GM12878 (cell line): ENCODE measurements at regions of chr6 and their contacts with region 1.

Region 1: GRCh38 chr6:157405986-157406385 is 25.0 kb downstream of the ZDHHC14 start:
- DNase-seq: no peak
- ATAC-seq: no peak
- H3K4me3 ChIP-seq: no peak overlapping the region
- H3K27ac ChIP-seq: no peak overlapping the region
- H3K4me1 ChIP-seq: no peaks in the 10 kb centered on the region
- H3K27me3 ChIP-seq: no peaks in the 10 kb centered on the region; a peak in 1 of 4 replicates
- CTCF ChIP-seq: no peak
- EP300 ChIP-seq: no peak
- POLR2A ChIP-seq: no peak
- RAD21 ChIP-seq: no peak

Region 2: DNA sequence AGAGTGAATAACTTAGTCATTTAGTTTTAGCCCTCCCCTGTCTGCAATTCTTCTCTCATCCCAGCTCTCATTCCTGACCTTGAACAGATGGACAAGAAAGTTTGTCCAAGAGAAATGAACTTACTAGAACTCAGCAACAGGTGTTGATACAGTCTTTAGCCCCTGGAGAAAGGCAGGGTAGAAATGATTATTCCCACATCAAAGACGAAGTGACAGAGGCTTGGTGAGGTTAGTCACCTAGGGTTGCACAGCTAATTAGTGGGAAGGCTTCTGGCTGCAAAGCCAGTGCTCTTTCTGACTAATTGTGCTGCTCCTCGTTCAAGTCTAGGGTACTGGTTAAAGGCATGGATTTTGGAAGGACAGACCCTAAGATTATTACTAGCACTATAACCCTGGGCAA is 20.5 kb before region 1 on chr6:
- CTCF ChIA-PET with region 1: no interaction called
- POLR2A ChIA-PET with region 1: no interaction called
- RAD21 ChIA-PET with region 1: no interaction called
- SMC1A ChIA-PET with region 1: interaction called, 14 read pairs
- in situ Hi-C with region 1: no loop called
- intact Hi-C with region 1: no loop called
- DNase-seq: peak; percentile 44
- ATAC-seq: peak; percentile 45
- H3K4me3 ChIP-seq: no peak overlapping the region
- H3K27ac ChIP-seq: no peak overlapping the region
- H3K4me1 ChIP-seq: no peaks in the 10 kb centered on the region
- H3K27me3 ChIP-seq: peaks cover 0 to 4% of the 10 kb centered on the region in 2 experiments; a peak in 1 of 4 replicates
- CTCF ChIP-seq: no peak
- EP300 ChIP-seq: peak; percentile 48 to 52; a peak in 2 of 4 replicates
- POLR2A ChIP-seq: no peak
- RAD21 ChIP-seq: no peak

Region 3: DNA sequence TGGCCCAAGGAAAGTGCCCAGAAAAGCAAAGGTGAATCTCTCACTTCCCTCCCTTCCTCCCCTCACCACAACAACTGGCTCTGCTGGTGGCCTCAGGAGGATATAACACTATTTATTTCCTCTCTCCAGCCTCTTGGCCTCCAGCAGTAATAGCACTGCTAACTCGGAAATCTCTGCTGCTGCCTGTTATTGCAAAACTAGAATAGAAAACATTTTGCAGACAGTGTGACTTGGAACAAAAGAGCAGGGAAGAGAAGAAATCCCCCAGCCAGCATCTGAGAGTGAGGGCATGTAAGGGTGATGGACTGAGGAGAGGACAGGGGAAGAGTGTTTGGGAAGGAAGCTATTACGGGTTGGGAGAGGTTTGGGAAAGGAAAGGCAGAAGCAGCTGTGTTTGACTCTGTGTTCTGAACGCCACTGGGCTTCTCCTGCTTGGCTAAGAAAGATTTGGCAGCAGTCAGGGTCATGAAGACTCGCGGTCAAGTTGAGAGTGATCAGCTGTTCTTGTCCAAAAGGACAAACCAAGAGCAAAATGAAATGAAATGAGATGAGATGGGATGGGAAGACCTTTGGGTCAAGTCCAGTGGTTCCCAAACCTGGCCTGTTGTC is 336.1 kb after region 1 on chr6:
- CTCF ChIA-PET with region 1: no interaction called
- POLR2A ChIA-PET with region 1: no interaction called
- RAD21 ChIA-PET with region 1: no interaction called
- SMC1A ChIA-PET with region 1: no interaction called
- in situ Hi-C with region 1: no loop called
- intact Hi-C with region 1: no loop called
- DNase-seq: no peak
- ATAC-seq: no peak
- H3K4me3 ChIP-seq: no peak overlapping the region
- H3K27ac ChIP-seq: no peak overlapping the region
- H3K4me1 ChIP-seq: no peaks in the 10 kb centered on the region
- H3K27me3 ChIP-seq: peaks cover 0 to 2% of the 10 kb centered on the region in 2 experiments; a peak in 2 of 4 replicates
- CTCF ChIP-seq: no peak
- EP300 ChIP-seq: no peak
- POLR2A ChIP-seq: no peak
- RAD21 ChIP-seq: no peak